Activated CD4-positive, alpha-beta T cell treated with anti-CD3 and anti-CD28 coated beads, Interleukin-2, amount 10 ng/mL, durations not matched to agents 24 days and 14 days (primary cell): ENCODE measurements at regions of chr16 and their contacts with region 1.

Region 1: GRCh38 chr16:11094072-11094856 is 149.9 kb downstream of the CLEC16A start:
- DNase-seq: peak; percentile 89
- H3K4me3 Mint-ChIP-seq: peak overlapping the region; percentile 71
- H3K27ac Mint-ChIP-seq: peak overlapping the region; percentile 98
- H3K4me1 Mint-ChIP-seq: peaks cover 66% of the 10 kb centered on the region
- H3K27me3 Mint-ChIP-seq: no peaks in the 10 kb centered on the region

Region 2: GRCh38 chr16:11025120-11025531 is 69.1 kb before region 1 on chr16:
- intact Hi-C with region 1: loop called (anchors 1 kb)
- DNase-seq: no peak
- H3K4me3 Mint-ChIP-seq: no peak overlapping the region
- H3K27ac Mint-ChIP-seq: peak overlapping the region; percentile 75
- H3K4me1 Mint-ChIP-seq: peaks cover 17% of the 10 kb centered on the region
- H3K27me3 Mint-ChIP-seq: no peaks in the 10 kb centered on the region

Region 3: DNA sequence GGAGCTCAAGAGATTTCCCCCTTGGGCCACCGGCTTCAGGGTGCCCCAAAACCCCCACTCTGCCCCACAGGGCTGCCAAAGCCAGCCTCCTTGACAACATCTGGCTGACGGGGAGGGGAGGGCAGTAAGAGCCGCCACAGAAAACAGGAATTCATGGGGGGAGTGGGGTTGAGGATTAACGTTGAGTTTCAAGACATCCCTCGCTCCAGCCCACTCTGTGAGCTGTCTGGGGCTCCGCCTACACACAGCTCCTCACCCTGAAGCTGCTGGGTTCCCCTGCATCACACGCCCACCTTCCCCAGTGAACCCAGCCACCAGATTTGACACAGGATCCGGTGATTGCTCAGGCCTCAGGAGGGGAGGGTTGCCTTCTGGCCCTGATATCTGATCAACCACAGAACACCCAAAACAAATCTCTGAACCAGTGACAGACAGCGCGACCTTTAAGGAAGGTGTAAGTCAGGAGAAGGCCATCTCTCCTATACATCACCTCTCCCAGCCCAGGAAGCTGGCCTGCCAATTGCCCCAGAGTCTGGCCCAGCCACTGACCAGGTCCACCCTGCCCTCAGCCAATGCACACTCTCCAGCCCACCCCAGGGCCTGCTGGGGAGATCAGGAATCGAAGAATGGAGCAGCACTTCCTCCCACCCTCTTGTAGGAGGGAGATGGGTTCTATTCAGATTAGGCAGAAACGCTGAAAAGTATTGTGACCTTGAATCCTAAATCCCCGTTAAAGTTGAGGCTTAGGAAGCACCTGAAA is 17.8 kb before region 1 on chr16:
- intact Hi-C with region 1: loop called (anchors 1 kb)
- DNase-seq: peak; percentile 84
- H3K4me3 Mint-ChIP-seq: peak overlapping the region; percentile 55
- H3K27ac Mint-ChIP-seq: peak overlapping the region; percentile 90
- H3K4me1 Mint-ChIP-seq: peaks cover 88% of the 10 kb centered on the region
- H3K27me3 Mint-ChIP-seq: no peaks in the 10 kb centered on the region

Region 4: DNA sequence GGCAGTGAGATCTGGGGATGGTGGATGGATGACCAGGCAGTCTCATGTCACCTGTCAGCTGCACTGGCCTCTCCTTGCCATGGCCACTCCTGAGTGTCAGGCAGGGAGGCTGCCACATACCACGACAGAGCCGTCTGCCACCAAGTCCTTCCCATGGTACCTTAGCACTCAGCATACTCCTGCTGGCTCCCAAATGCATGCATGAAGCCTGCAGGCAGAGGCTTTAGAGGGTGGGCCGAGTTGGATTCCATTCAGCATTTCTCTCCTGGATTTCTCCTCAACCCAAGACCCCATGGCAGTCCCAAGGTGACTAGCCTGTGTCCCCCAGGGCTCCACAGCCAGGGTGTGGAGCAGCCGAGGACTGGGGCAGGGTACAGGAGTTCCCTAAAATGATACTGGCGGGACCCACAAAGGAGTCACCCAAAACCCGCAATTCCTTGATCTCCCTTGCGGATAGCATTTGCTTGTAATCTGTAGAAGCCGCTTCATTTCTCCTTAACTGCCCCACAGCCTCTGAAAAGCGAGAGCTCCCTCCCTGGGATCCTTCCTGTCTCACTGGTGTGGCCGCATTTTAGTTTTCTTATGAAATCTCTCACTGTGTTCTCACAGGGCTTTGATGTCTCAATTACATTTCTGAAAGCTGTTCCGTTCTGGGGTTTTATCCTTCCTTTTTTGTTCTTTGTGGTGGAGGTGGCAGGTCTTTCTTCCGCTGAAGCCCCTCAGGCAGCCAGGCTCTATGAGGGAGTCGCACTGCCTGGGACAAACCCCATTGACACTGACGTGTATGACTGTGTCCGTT is 20.3 kb after region 1 on chr16:
- intact Hi-C with region 1: loop called (anchors 1 kb)
- DNase-seq: peak; percentile 87
- H3K4me3 Mint-ChIP-seq: peak overlapping the region; percentile 68
- H3K27ac Mint-ChIP-seq: peak overlapping the region; percentile 85
- H3K4me1 Mint-ChIP-seq: peaks cover 53% of the 10 kb centered on the region
- H3K27me3 Mint-ChIP-seq: no peaks in the 10 kb centered on the region

Region 5: GRCh38 chr16:11232852-11233726 is 138.8 kb after region 1 on chr16:
- intact Hi-C with region 1: loop called (anchors 1 kb)
- DNase-seq: peak; percentile 98
- H3K4me3 Mint-ChIP-seq: peak overlapping the region; percentile 78
- H3K27ac Mint-ChIP-seq: peak overlapping the region; percentile 98
- H3K4me1 Mint-ChIP-seq: peaks cover 74% of the 10 kb centered on the region
- H3K27me3 Mint-ChIP-seq: no peaks in the 10 kb centered on the region